CD4-positive, alpha-beta memory T cell (primary cell): ENCODE measurements at regions of chr17 and their contacts with region 1.

Region 1: DNA sequence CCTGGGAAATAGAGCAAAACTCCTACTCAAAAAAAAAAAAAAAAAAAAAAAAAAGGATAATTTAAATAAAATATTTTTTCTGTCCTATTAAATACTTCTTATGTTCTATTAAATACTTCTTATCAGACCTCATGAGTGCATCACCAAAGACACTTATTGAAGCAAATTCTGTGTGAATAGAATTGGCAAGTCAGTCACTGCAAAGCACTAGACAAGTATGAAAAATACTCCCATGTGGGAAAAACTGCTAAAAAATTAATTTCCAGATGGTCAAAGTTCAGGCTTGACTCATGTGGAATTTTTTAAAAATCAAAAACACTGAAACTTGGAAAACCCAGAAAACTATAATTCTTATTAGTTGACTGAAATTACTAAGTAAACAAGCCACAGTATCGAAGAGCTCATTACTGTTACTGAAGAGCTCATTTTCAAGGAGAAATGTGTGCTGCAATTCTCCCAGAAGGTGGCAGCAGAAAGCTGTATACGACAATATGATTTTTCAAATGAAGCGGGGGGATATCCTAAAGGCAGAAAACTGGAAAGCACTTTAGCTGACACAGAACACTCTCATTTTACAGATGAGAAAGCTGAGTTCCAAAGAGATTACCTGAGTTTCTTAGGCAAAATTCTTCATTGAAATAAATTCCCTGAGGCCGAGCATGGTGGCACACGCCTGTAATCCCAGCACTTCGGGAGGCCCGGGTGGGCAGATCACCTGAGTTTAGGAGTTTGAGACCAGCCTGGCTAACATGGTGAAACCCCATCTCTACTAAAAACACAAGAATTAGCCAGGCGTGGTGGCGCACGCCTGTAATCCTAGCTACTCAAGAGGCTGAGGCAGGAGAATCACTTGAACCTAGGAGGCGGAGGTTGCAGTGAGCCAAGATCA is 15.9 kb upstream of the FBXO47 start:
- DNase-seq: peak; percentile 58 to 67 (median 59)
- H3K4me3 ChIP-seq: no peak overlapping the region
- H3K4me3 Mint-ChIP-seq: no peak overlapping the region
- H3K27ac ChIP-seq: no peak overlapping the region
- H3K27ac Mint-ChIP-seq: no peak overlapping the region
- H3K4me1 ChIP-seq: no peaks in the 10 kb centered on the region
- H3K4me1 Mint-ChIP-seq: peaks cover 0 to 4% (median 2%) of the 10 kb centered on the region in 4 donors
- H3K27me3 ChIP-seq: no peaks in the 10 kb centered on the region
- H3K27me3 Mint-ChIP-seq: peaks cover 0 to 1% of the 10 kb centered on the region in 2 donors

Region 2: DNA sequence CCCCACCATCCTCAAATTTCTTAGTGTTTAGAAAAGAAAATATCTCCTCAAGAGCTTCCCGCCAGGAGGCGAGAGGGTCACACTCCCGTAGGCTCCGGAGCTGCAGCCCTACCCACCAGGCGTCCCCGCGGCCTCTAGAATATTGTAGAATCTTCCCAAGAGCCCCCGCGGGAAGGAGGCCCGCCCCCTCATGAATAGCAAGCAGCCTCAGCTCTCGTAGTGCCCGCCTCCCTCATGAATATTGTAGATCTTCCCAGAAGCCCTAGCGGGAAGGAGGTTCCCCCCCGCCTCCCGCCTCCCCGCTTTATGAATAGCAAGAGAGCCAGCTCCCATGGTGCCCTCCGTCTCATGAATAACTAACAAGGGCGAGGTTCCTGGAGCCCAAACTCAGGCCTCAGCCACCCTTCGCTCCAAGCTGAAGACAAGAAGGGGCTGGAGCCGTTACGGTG is 15.8 kb before region 1 on chr17 and contains the start of gene FBXO47:
- CTCF ChIA-PET with region 1: interaction called, 30 read pairs
- POLR2A ChIA-PET with region 1: no interaction called
- intact Hi-C with region 1: no loop called
- DNase-seq: peak; percentile 69 to 89 (median 77)
- H3K4me3 ChIP-seq: peak within 1 kb of the TSS in 1 of 2 donors; percentile 10
- H3K4me3 Mint-ChIP-seq: peak within 1 kb of the TSS; percentile 70 to 87 (median 81)
- H3K27ac ChIP-seq: no peak within 1 kb of the TSS
- H3K27ac Mint-ChIP-seq: peak within 1 kb of the TSS; percentile 74 to 90 (median 86)
- H3K4me1 ChIP-seq: peaks cover 7% of the 10 kb centered on the region
- H3K4me1 Mint-ChIP-seq: peaks cover 7 to 16% (median 12%) of the 10 kb centered on the region in 4 donors
- H3K27me3 ChIP-seq: no peaks in the 10 kb centered on the region
- H3K27me3 Mint-ChIP-seq: no peaks in the 10 kb centered on the region
- total RNA-seq, gene FBXO47: not detected

Region 3: DNA sequence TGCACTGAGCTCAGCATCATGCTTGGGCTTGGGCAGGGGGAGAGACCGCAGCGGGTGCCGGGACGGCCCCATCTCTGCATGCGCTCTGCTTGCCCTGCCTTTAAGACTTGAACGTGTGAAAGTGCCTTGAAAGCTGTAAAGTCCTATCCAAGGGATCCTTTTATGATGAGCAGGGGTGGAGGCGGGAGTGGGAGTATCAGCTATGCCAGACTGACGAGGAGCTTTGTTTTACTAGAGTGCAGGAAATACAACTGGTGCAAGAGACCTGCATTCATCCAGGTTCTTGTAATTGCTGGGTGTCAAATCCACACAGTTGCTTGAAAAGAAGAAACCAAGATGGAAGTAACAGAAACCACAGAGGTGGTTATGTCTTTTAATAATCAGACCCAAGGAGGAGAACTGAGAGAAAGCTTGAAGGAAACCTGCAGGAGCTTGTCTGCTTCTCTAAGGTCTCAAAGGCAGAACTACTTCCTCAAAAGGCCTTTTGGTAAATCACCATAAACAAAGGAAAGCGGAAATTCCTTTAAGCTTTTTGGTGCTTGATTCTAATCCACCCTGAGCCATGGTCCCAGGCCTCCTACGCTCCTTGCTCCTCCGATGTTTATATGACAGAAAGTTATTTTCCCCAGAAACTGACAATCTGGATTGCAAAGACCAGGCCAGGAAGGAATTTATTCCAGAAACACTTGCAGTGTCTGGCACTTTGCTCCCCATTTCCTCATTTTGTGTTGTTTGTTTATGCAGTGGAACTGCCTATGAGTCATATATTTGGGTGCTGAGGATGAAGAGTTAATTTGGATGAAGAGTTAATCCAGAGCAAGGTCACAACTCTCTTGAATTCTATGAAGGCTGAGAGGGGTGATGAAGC is 35.4 kb after region 1 on chr17:
- CTCF ChIA-PET with region 1: interaction called, 13 read pairs
- POLR2A ChIA-PET with region 1: interaction called, 3 read pairs
- intact Hi-C with region 1: no loop called
- DNase-seq: peak in 2 of 5 donors; percentile 7 to 14
- H3K4me3 ChIP-seq: no peak overlapping the region
- H3K4me3 Mint-ChIP-seq: peak overlapping the region in 6 of 8 donors; percentile 1 to 55 (median 34)
- H3K27ac ChIP-seq: no peak overlapping the region
- H3K27ac Mint-ChIP-seq: peak overlapping the region; percentile 43 to 93 (median 81)
- H3K4me1 ChIP-seq: peaks cover 37% of the 10 kb centered on the region
- H3K4me1 Mint-ChIP-seq: peaks cover 18 to 36% (median 25%) of the 10 kb centered on the region in 4 donors
- H3K27me3 ChIP-seq: no peaks in the 10 kb centered on the region
- H3K27me3 Mint-ChIP-seq: no peaks in the 10 kb centered on the region

Region 4: DNA sequence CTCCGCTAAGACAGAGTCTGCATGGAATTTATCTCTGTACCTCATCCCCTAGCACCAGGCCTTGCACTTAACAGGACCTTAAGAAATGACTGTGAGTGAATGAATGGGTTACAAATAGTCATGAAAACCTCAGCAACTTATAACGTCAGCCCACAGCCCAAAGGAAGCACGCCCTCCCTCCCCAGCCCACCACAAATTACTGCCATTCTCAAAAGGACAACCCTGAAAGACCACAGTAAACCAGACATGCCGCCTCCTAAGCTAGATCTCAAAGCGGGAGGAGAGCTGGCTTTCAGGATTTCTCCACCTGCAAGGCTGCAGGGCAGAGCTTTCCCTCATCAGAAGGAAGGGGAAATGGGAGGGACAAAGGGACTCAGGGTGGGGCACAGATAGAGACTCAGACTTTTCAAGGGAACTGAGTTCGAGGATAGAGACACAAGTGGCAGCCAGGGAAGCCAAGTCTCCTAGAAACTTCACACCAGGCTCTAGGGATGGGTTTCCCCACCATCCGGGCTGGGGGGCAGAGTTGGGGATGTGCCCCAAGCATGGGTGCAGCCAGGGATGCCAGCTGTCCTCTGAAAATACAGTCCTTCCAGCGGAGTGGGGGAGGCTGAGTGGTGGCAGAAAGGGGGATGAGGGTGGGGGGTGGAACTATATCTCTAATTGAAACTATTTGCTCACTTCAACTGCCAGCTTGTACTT is 111.7 kb after region 1 on chr17:
- CTCF ChIA-PET with region 1: interaction called, 30 read pairs
- POLR2A ChIA-PET with region 1: no interaction called
- intact Hi-C with region 1: loop called (anchors 1 kb)
- DNase-seq: peak; percentile 32 to 74 (median 69)
- H3K4me3 ChIP-seq: peak overlapping the region in 1 of 2 donors; percentile 29
- H3K4me3 Mint-ChIP-seq: peak overlapping the region; percentile 72 to 91 (median 84)
- H3K27ac ChIP-seq: peak overlapping the region; percentile 42
- H3K27ac Mint-ChIP-seq: peak overlapping the region; percentile 82 to 98 (median 96)
- H3K4me1 ChIP-seq: peaks cover 89% of the 10 kb centered on the region
- H3K4me1 Mint-ChIP-seq: peaks cover 65 to 87% (median 75%) of the 10 kb centered on the region in 4 donors
- H3K27me3 ChIP-seq: no peaks in the 10 kb centered on the region
- H3K27me3 Mint-ChIP-seq: no peaks in the 10 kb centered on the region

Region 5: GRCh38 chr17:39174907-39175694 is 192.0 kb after region 1 on chr17:
- CTCF ChIA-PET with region 1: interaction called, 153 read pairs
- POLR2A ChIA-PET with region 1: interaction called, 11 read pairs
- intact Hi-C with region 1: loop called (anchors 1 kb)
- DNase-seq: peak; percentile 68 to 73 (median 72)
- H3K4me3 ChIP-seq: no peak overlapping the region
- H3K4me3 Mint-ChIP-seq: no peak overlapping the region
- H3K27ac ChIP-seq: no peak overlapping the region
- H3K27ac Mint-ChIP-seq: peak overlapping the region in 6 of 7 donors; percentile 23 to 84 (median 67)
- H3K4me1 ChIP-seq: no peaks in the 10 kb centered on the region
- H3K4me1 Mint-ChIP-seq: peaks cover 5 to 24% (median 10%) of the 10 kb centered on the region in 4 donors
- H3K27me3 ChIP-seq: no peaks in the 10 kb centered on the region
- H3K27me3 Mint-ChIP-seq: no peaks in the 10 kb centered on the region